ENCODE measurements at regions of chr6 and their contacts with region 1.

Region 1: DNA sequence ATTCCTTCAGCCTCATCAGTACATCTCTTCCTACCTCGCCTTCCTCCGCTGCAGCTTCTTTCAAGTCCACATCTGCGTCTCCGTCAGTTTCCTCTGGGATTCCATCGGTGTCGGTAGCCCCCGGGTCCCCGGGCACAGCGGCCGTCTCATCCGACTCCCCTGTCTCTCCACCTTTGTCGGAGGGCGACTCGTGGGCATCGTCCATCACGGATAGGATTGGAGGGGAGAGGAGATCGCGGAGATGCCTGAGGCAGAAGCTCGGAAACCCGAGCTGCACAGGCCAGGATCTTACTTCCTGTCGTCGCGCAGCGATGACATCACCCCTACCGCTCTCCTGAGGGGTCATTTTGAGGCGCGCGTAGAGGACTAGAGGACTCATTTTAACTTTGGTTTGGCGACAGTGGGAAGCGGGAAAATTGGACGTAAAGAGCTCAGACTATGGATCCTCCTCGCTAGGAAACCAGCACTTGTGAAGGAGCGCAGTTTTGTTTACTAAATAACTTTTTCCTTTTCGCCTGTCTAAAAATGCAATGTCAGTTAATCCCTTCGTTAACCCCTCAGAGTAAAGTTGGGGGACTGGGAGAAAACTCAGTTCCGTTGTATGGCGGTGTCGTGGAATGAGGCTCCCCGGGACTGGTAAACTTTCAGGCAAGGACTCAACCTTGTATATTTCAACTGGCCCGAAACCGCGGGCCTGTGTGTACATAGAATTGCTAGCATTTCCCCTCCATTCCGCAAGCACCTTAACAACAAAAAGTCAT is at the start of gene TAF11:
- DNase-seq: peak; percentile 93
- H3K4me3 Mint-ChIP-seq: peak within 1 kb of the TSS; percentile 99
- H3K27ac Mint-ChIP-seq: peak within 1 kb of the TSS; percentile 98
- H3K4me1 Mint-ChIP-seq: peaks cover 52% of the 10 kb centered on the region
- H3K27me3 Mint-ChIP-seq: peaks cover 6% of the 10 kb centered on the region
- total RNA-seq, gene TAF11: 27.4 to 28.5 TPM

Region 2: DNA sequence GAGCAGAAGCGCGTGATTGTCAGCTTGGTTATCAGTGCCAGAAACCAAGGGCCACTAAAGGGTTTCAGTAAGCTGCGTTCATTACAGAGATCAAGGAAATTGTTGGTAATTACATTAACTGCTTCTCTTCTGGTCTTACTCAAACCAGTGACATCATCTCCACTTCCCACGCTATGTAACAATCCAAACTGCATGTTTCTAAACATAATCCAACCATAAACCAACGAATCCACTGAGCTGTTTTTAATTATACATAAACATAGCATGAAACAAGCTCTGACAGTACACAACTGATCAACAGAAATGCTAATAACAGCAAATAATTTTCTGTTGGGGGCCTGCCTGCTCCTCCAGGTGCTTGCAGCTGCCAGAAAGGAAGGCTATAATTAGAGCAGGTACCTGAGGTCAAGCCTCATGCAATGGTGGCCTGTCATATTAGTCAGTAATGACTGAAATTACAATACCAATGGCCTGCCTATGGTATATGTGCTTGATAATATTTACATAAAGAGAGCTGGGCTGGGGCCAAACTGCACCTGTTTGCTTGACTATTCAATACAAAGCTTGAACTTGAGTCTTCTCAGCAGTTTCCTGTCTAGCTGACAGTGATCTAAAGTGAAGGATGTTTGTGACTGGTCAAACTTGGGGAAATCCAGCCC is 231.4 kb before region 1 on chr6:
- CTCF ChIA-PET with region 1: no interaction called
- POLR2A ChIA-PET with region 1: interaction called, 15 read pairs
- DNase-seq: peak; percentile 47
- H3K4me3 Mint-ChIP-seq: peak overlapping the region; percentile 67
- H3K27ac Mint-ChIP-seq: peak overlapping the region; percentile 95
- H3K4me1 Mint-ChIP-seq: peaks cover 53% of the 10 kb centered on the region
- H3K27me3 Mint-ChIP-seq: no peaks in the 10 kb centered on the region

Region 3: DNA sequence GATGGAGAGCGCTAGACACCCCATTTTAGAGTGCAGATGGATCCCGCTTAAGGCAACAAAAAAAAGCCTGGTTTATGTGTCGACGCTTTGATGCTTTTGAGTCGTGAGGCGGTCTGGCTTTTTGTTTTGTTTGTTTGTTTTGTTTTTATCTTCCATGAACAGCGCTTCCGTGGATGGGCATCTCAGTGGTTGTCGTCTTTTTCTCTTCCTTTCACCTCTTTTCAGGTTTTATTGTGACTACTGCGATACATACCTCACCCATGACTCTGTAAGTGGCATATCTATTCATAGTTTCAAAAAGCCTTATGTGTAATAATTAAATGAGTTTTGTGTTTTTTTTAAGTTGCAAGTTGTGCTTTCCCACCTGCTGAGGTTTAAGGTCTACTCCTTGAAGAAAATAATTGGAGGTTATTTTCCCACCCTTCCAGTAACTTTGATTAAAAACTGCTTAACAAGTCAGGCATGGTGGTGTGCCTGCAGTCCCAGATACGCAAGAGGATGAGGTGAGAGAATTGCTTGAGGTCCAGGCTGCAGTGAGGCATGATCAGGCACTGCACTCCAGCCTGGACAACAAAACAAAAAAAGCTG is 130.2 kb before region 1 on chr6:
- CTCF ChIA-PET with region 1: interaction called, 3 read pairs
- POLR2A ChIA-PET with region 1: interaction called, 27 read pairs
- DNase-seq: no peak
- H3K4me3 Mint-ChIP-seq: no peak overlapping the region
- H3K27ac Mint-ChIP-seq: no peak overlapping the region
- H3K4me1 Mint-ChIP-seq: peaks cover 13% of the 10 kb centered on the region
- H3K27me3 Mint-ChIP-seq: no peaks in the 10 kb centered on the region

Region 4: DNA sequence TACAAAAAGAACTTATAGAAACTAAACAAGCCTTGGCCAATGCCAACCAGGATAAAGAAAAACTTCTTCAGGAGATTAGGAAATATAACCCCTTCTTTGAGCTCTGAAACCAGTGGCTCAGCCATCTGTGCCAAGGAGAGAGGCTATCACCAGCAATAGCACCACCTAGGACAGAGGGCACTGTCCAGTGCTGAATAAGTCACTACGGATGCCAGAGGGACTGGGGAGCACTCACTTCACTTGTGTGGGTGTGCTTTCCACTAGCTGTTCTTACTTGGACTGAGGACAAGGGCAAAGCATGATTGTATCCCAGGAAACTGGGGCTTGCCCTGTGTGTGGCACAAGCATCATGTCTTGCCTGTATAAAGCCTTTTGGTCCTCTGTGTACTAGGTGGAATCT is 15.6 kb before region 1 on chr6:
- CTCF ChIA-PET with region 1: no interaction called
- POLR2A ChIA-PET with region 1: interaction called, 24 read pairs
- DNase-seq: no peak
- H3K4me3 Mint-ChIP-seq: no peak overlapping the region
- H3K27ac Mint-ChIP-seq: no peak overlapping the region
- H3K4me1 Mint-ChIP-seq: no peaks in the 10 kb centered on the region
- H3K27me3 Mint-ChIP-seq: no peaks in the 10 kb centered on the region

Region 5: DNA sequence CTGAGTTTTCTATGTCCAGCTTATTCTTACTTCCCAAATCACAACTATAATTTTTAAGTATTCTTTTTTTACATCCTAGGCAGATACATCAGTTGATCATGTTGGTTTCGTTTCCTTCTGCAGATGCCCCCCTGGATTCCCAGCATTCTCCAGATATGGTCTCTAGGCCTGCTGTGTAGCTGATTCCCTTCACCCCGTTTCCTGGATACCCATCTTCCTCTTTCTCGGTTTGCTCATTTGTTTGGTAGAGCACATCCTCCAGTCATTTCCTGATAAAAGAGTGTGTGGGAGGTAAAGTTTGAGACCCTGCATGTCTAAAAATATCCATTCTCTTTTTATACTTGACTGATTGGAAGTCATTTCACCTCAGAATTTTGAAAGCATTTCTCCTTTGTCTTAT is 67.5 kb after region 1 on chr6:
- CTCF ChIA-PET with region 1: no interaction called
- POLR2A ChIA-PET with region 1: no interaction called
- DNase-seq: no peak
- H3K4me3 Mint-ChIP-seq: no peak overlapping the region
- H3K27ac Mint-ChIP-seq: no peak overlapping the region
- H3K4me1 Mint-ChIP-seq: peaks cover 7% of the 10 kb centered on the region
- H3K27me3 Mint-ChIP-seq: no peaks in the 10 kb centered on the region

Region 6: DNA sequence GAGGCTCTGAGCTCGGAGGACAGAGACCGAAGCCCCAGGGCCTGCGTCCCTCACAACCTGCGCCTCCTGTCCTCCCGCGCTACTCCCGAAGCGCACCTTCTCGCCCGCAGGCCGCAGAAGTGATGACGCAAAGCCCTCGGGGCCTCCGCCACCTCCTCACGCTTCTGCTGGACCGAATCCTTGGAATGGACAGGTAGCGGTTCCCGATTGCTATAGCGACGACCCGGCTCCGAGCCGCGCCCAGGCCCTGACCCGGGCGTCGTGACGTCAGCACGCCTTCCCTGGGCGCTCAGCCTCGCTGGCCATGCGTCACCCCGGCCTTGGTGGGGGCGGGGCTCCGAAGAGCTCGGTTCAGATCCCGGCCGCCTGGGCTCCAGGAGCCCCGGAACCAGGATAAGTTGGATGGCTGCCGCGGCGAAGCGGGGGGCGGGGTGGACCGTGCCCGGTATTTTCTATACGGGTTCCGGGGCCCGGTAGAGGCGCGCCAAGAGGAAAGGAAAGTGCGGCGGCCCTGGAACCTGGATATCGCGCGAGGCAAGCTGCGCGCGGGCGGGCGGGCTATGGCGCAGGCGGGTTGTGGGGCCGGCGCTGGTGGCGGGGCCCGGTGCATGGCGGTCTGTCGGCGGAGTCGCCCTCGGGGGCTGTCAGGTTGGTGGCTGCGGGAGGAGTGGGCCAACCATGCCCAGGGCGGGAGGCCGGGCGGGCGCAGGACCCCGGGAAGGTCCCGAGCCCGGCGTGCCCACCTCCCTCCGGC is 371.4 kb after region 1 on chr6 and contains the start of gene ZNF76:
- CTCF ChIA-PET with region 1: no interaction called
- POLR2A ChIA-PET with region 1: interaction called, 12 read pairs
- DNase-seq: peak; percentile 91
- H3K4me3 Mint-ChIP-seq: peak within 1 kb of the TSS; percentile 92
- H3K27ac Mint-ChIP-seq: peak within 1 kb of the TSS; percentile 79
- H3K4me1 Mint-ChIP-seq: peaks cover 50% of the 10 kb centered on the region
- H3K27me3 Mint-ChIP-seq: no peaks in the 10 kb centered on the region
- total RNA-seq, gene ZNF76: 42.6 to 42.7 TPM

Measured in activated CD4-positive, alpha-beta memory T cell treated with anti-CD3 and anti-CD28 coated beads, Interleukin-2, amount 10 ng/mL, durations not matched to agents 7 days and 5 days (primary cell).